Activated naive CD4-positive, alpha-beta T cell treated with anti-CD3 and anti-CD28 coated beads, Interleukin-2, amount 10 ng/mL, durations not matched to agents 7 days and 5 days (primary cell): ENCODE measurements at regions of chr10 and their contacts with region 1.

Region 1: GRCh38 chr10:59906417-59907202 is at the start of gene CCDC6:
- DNase-seq: peak; percentile 94
- H3K4me3 Mint-ChIP-seq: peak within 1 kb of the TSS; percentile 81
- H3K27ac Mint-ChIP-seq: peak within 1 kb of the TSS; percentile 97
- H3K4me1 Mint-ChIP-seq: peaks cover 51% of the 10 kb centered on the region
- H3K27me3 Mint-ChIP-seq: no peaks in the 10 kb centered on the region

Region 2: GRCh38 chr10:59872892-59873463 is 33.6 kb before region 1 on chr10:
- CTCF ChIA-PET with region 1: interaction called, 37 read pairs
- DNase-seq: no peak
- H3K4me3 Mint-ChIP-seq: no peak overlapping the region
- H3K27ac Mint-ChIP-seq: peak overlapping the region; percentile 53
- H3K4me1 Mint-ChIP-seq: peaks cover 26% of the 10 kb centered on the region
- H3K27me3 Mint-ChIP-seq: no peaks in the 10 kb centered on the region

Region 3: GRCh38 chr10:59879361-59879913 is 27.2 kb before region 1 on chr10:
- CTCF ChIA-PET with region 1: interaction called, 13 read pairs
- DNase-seq: no peak
- H3K4me3 Mint-ChIP-seq: no peak overlapping the region
- H3K27ac Mint-ChIP-seq: peak overlapping the region; percentile 21
- H3K4me1 Mint-ChIP-seq: peaks cover 48% of the 10 kb centered on the region
- H3K27me3 Mint-ChIP-seq: no peaks in the 10 kb centered on the region

Region 4: GRCh38 chr10:59885430-59886134 is 21.0 kb before region 1 on chr10:
- CTCF ChIA-PET with region 1: interaction called, 22 read pairs
- DNase-seq: no peak
- H3K4me3 Mint-ChIP-seq: no peak overlapping the region
- H3K27ac Mint-ChIP-seq: no peak overlapping the region
- H3K4me1 Mint-ChIP-seq: peaks cover 57% of the 10 kb centered on the region
- H3K27me3 Mint-ChIP-seq: no peaks in the 10 kb centered on the region